CD8-positive, alpha-beta memory T cell (primary cell): ENCODE measurements at regions of chr11 and their contacts with region 1.

Region 1: GRCh38 chr11:7513234-7514098 is at the start of gene PPFIBP2:
- DNase-seq: peak; percentile 78 to 86 (median 83)
- H3K4me3 ChIP-seq: peak within 1 kb of the TSS; percentile 97
- H3K4me3 Mint-ChIP-seq: peak within 1 kb of the TSS; percentile 94 to 99 (median 95)
- H3K27ac ChIP-seq: peak within 1 kb of the TSS; percentile 66
- H3K27ac Mint-ChIP-seq: peak within 1 kb of the TSS; percentile 87 to 100 (median 95)
- H3K4me1 ChIP-seq: peaks cover 24% of the 10 kb centered on the region
- H3K4me1 Mint-ChIP-seq: peaks cover 29 to 43% (median 31%) of the 10 kb centered on the region in 3 donors
- H3K27me3 ChIP-seq: no peaks in the 10 kb centered on the region
- H3K27me3 Mint-ChIP-seq: peaks cover 0 to 3% of the 10 kb centered on the region in 2 donors
- total RNA-seq, gene PPFIBP2: 3.9 to 4.4 TPM

Region 2: GRCh38 chr11:7524462-7525235 is 11.2 kb after region 1 on chr11:
- CTCF ChIA-PET with region 1: interaction called, 20 read pairs
- POLR2A ChIA-PET with region 1: no interaction called
- DNase-seq: no peak
- H3K4me3 ChIP-seq: no peak overlapping the region
- H3K4me3 Mint-ChIP-seq: no peak overlapping the region
- H3K27ac ChIP-seq: no peak overlapping the region
- H3K27ac Mint-ChIP-seq: peak overlapping the region in 2 of 8 donors; percentile 45 to 48
- H3K4me1 ChIP-seq: peaks cover 52% of the 10 kb centered on the region
- H3K4me1 Mint-ChIP-seq: peaks cover 48 to 56% (median 50%) of the 10 kb centered on the region in 3 donors
- H3K27me3 ChIP-seq: no peaks in the 10 kb centered on the region
- H3K27me3 Mint-ChIP-seq: no peaks in the 10 kb centered on the region

Region 3: DNA sequence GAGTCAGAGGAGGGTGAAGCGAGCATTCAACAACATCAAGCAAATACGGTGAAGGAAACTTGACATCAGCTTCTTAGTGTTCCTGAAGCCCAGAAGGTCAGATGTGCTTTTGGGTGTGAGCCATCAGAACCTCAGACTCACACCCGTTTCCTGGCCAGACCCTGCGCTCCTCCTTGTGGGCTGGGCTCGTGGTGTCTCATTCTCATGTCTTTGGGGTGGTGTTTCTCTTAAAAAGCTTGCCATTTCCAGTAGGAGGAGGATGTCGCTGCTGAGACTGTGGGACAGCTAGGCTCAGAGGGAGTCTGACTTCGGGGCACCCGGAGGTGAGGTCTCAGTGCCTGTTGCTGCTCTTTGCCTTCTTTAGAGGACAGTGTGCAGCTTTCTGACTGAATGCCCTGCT is 24.6 kb after region 1 on chr11:
- CTCF ChIA-PET with region 1: interaction called, 13 read pairs
- POLR2A ChIA-PET with region 1: no interaction called
- DNase-seq: no peak
- H3K4me3 ChIP-seq: no peak overlapping the region
- H3K4me3 Mint-ChIP-seq: peak overlapping the region in 5 of 7 donors; percentile 37 to 57 (median 49)
- H3K27ac ChIP-seq: no peak overlapping the region
- H3K27ac Mint-ChIP-seq: peak overlapping the region in 5 of 8 donors; percentile 50 to 90 (median 64)
- H3K4me1 ChIP-seq: peaks cover 19% of the 10 kb centered on the region
- H3K4me1 Mint-ChIP-seq: peaks cover 23 to 47% (median 43%) of the 10 kb centered on the region in 3 donors
- H3K27me3 ChIP-seq: no peaks in the 10 kb centered on the region
- H3K27me3 Mint-ChIP-seq: peaks cover 8 to 9% of the 10 kb centered on the region in 2 donors

Region 4: GRCh38 chr11:7548659-7549274 is 35.3 kb after region 1 on chr11:
- CTCF ChIA-PET with region 1: interaction called, 15 read pairs
- POLR2A ChIA-PET with region 1: no interaction called
- DNase-seq: peak in 1 of 5 donors; percentile 15
- H3K4me3 ChIP-seq: no peak overlapping the region
- H3K4me3 Mint-ChIP-seq: no peak overlapping the region
- H3K27ac ChIP-seq: no peak overlapping the region
- H3K27ac Mint-ChIP-seq: peak overlapping the region in 2 of 8 donors; percentile 47 to 55
- H3K4me1 ChIP-seq: no peaks in the 10 kb centered on the region
- H3K4me1 Mint-ChIP-seq: peaks cover 0 to 3% (median 0%) of the 10 kb centered on the region in 3 donors
- H3K27me3 ChIP-seq: no peaks in the 10 kb centered on the region
- H3K27me3 Mint-ChIP-seq: peaks cover 0 to 2% of the 10 kb centered on the region in 2 donors

Region 5: GRCh38 chr11:7657306-7658025 is 144.0 kb after region 1 on chr11:
- CTCF ChIA-PET with region 1: interaction called, 16 read pairs
- POLR2A ChIA-PET with region 1: no interaction called
- DNase-seq: peak in 2 of 5 donors; percentile 17 to 35
- H3K4me3 ChIP-seq: no peak overlapping the region
- H3K4me3 Mint-ChIP-seq: no peak overlapping the region
- H3K27ac ChIP-seq: no peak overlapping the region
- H3K27ac Mint-ChIP-seq: no peak overlapping the region
- H3K4me1 ChIP-seq: no peaks in the 10 kb centered on the region
- H3K4me1 Mint-ChIP-seq: no peaks in the 10 kb centered on the region
- H3K27me3 ChIP-seq: no peaks in the 10 kb centered on the region
- H3K27me3 Mint-ChIP-seq: peaks cover 0 to 4% of the 10 kb centered on the region in 2 donors

Region 6: GRCh38 chr11:7665473-7666291 is 152.2 kb after region 1 on chr11:
- CTCF ChIA-PET with region 1: interaction called, 35 read pairs
- POLR2A ChIA-PET with region 1: no interaction called
- DNase-seq: peak; percentile 51 to 78 (median 59)
- H3K4me3 ChIP-seq: no peak overlapping the region
- H3K4me3 Mint-ChIP-seq: no peak overlapping the region
- H3K27ac ChIP-seq: no peak overlapping the region
- H3K27ac Mint-ChIP-seq: no peak overlapping the region
- H3K4me1 ChIP-seq: no peaks in the 10 kb centered on the region
- H3K4me1 Mint-ChIP-seq: peaks cover 0 to 5% (median 2%) of the 10 kb centered on the region in 3 donors
- H3K27me3 ChIP-seq: no peaks in the 10 kb centered on the region
- H3K27me3 Mint-ChIP-seq: peaks cover 7 to 8% of the 10 kb centered on the region in 2 donors